PC-9 (cell line): ENCODE measurements at regions of chr17 and their contacts with region 1.

Region 1: DNA sequence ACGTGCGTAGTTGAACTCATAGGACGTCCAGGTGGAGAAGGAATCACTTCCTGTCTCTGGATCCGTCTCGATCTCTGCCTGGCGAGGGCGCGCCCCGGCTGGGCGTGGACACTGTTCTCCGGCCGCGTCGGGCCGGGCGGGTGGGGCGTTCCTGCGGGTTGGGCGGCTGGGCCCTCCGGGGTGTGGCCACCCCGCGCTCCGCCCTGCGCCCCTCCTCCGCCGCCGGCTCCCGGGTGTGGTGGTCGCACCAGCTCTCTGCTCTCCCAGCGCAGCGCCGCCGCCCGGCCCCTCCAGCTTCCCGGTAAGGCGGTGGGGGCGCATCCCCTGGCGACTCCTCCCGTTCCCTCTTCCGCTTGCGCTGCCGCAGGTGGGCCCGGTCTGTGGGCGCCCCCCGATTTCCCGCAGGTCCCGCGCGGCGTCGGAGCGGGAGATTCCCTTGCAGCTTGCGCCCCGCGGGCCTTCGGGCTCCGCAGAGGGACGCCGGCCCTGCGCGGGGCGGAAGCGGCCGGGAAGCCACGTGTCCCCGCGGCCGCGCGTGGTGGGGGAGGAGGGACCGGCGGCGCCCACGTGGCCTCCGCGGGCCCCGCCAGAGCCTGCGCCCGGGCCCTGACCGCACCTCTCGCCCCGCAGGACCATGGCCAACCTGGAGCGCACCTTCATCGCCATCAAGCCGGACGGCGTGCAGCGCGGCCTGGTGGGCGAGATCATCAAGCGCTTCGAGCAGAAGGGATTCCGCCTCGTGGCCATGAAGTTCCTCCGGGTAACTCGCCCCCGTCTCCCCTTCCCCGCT is at the start of gene NME2:
- DNase-seq: peak; percentile 79 to 90
- H3K4me3 ChIP-seq: peak within 1 kb of the TSS; percentile 80
- H3K27ac ChIP-seq: peak within 1 kb of the TSS; percentile 78
- H3K4me1 ChIP-seq: peaks cover 18% of the 10 kb centered on the region; the same call in 1 of the 2 replicates
- H3K27me3 ChIP-seq: no peaks in the 10 kb centered on the region
- CTCF ChIP-seq: no peak
- total RNA-seq, gene NME2: 600 and 826 TPM in 2 replicates

Region 2: DNA sequence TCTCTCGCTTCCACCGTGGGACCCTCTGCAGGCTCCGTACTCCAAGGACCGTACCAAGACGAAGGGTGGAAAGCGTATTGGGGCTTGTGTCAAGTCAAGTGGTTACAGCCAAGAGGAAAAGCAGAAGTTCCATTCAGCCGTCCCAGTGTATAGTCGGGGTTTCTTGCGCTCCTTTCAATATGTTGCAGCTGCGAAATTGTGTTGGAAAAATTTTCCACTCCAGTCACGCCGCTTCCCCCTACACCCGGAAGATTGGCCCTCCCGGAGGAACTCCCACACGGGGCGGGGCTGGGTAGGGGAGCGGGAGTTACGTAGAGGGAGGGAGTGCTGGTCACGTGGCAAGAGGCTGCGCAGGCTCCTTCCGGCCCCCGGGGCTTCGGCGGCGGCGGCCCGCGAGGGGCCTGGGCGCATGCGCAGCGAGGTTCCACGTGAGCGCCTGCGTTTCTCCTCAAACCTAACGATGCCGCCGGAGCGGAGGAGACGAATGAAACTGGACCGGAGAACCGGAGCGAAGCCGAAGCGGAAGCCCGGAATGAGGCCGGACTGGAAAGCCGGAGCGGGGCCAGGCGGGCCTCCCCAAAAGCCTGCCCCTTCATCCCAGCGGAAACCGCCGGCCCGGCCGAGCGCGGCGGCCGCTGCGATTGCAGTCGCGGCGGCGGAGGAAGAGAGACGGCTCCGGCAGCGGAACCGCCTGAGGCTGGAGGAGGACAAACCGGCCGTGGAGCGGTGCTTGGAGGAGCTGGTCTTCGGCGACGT is 93.9 kb after region 1 on chr17 and contains the start of gene UTP18:
- CTCF ChIA-PET with region 1: no interaction called
- POLR2A ChIA-PET with region 1: no interaction called
- intact Hi-C with region 1: loop called (anchors 5 kb)
- DNase-seq: peak; percentile 93
- H3K4me3 ChIP-seq: peak within 1 kb of the TSS; percentile 94
- H3K27ac ChIP-seq: peak within 1 kb of the TSS; percentile 92
- H3K4me1 ChIP-seq: peaks cover 55% of the 10 kb centered on the region
- H3K27me3 ChIP-seq: no peaks in the 10 kb centered on the region
- CTCF ChIP-seq: no peak
- total RNA-seq, gene UTP18: 26.4 and 31.8 TPM in 2 replicates

Region 3: GRCh38 chr17:51275381-51275780 is 109.0 kb after region 1 on chr17:
- CTCF ChIA-PET with region 1: no interaction called
- POLR2A ChIA-PET with region 1: interaction called, 12 read pairs
- intact Hi-C with region 1: no loop called
- DNase-seq: no peak
- H3K4me3 ChIP-seq: no peak overlapping the region
- H3K27ac ChIP-seq: no peak overlapping the region
- H3K4me1 ChIP-seq: no peaks in the 10 kb centered on the region
- H3K27me3 ChIP-seq: no peaks in the 10 kb centered on the region
- CTCF ChIP-seq: no peak